Dorsolateral prefrontal cortex (tissue), 120 donors: ENCODE measurements at regions of chr13 and their contacts with region 1.

Region 1: GRCh38 chr13:105063676-105064075 is 1471.8 kb downstream of the EFNB2 start:
- DNase-seq: no peak
- H3K4me3 ChIP-seq: no peak overlapping the region
- H3K27ac ChIP-seq: no peak overlapping the region
- H3K27me3 ChIP-seq: no peaks in the 10 kb centered on the region
- CTCF ChIP-seq: no peak

Region 2: DNA sequence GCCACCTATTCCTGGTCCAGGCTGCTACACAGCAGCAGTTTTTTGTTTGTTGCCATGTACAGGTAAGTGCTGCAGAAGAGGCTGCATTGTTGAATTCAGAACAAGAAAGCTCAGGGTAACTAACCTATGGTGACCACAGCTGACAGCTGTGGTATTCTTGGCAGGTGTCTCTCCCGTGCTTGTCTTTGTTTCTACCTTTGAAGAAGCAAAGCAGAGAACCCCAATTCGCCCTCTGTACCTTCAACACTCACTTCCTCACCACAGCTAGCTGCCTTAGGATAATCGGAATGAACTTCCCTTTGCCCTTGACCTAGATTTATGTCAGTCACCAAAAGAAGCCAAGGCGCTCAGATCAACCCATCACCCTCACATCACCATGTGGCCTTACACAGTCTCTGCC is 294.1 kb before region 1 on chr13:
- intact Hi-C with region 1: no loop called
- DNase-seq: no peak
- H3K4me3 ChIP-seq: no peak overlapping the region
- H3K27ac ChIP-seq: no peak overlapping the region
- H3K27me3 ChIP-seq: no peaks in the 10 kb centered on the region
- CTCF ChIP-seq: no peak

Region 3: GRCh38 chr13:105016266-105016665 is 47.4 kb before region 1 on chr13:
- intact Hi-C with region 1: no loop called
- DNase-seq: no peak
- H3K4me3 ChIP-seq: no peak overlapping the region
- H3K27ac ChIP-seq: no peak overlapping the region
- H3K27me3 ChIP-seq: no peaks in the 10 kb centered on the region
- CTCF ChIP-seq: no peak

Region 4: DNA sequence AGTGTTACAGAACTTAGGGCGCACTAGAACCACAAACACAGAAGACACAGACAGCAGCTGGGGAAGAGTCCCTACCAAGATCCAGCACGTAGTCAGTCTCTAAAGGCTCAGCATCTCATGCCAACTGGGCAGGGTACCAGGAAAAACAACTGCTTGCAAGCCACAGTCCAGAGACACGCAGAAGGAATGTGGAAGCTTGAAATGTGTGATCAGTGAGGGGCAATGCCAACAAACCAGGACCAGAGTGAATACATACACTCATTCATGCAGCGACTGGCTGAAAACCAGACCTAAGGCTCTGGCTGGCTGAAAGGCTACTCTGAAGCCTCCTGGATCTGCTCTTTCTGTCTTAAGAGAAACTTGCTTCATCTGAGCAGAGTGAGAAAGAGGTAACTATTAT is 13.0 kb before region 1 on chr13:
- intact Hi-C with region 1: loop called in 1 of 2 experiments (anchors 1 kb)
- DNase-seq: no peak
- H3K4me3 ChIP-seq: no peak overlapping the region
- H3K27ac ChIP-seq: no peak overlapping the region
- H3K27me3 ChIP-seq: no peaks in the 10 kb centered on the region
- CTCF ChIP-seq: no peak